ENCODE measurements at regions of chr9 and their contacts with region 1.

Region 1: GRCh38 chr9:15873569-15874177 is 320.8 kb downstream of the CCDC171 start:
- DNase-seq: no peak
- ATAC-seq: peak; percentile 46

Region 2: GRCh38 chr9:14779566-14780022 is 1094.1 kb before region 1 on chr9:
- intact Hi-C with region 1: no loop called
- DNase-seq: no peak
- ATAC-seq: no peak

Region 3: GRCh38 chr9:16133556-16134227 is 260.0 kb after region 1 on chr9:
- intact Hi-C with region 1: loop called in 1 of 2 experiments (anchors 10 kb)
- DNase-seq: peak; percentile 31 to 47
- ATAC-seq: peak; percentile 88

Region 4: DNA sequence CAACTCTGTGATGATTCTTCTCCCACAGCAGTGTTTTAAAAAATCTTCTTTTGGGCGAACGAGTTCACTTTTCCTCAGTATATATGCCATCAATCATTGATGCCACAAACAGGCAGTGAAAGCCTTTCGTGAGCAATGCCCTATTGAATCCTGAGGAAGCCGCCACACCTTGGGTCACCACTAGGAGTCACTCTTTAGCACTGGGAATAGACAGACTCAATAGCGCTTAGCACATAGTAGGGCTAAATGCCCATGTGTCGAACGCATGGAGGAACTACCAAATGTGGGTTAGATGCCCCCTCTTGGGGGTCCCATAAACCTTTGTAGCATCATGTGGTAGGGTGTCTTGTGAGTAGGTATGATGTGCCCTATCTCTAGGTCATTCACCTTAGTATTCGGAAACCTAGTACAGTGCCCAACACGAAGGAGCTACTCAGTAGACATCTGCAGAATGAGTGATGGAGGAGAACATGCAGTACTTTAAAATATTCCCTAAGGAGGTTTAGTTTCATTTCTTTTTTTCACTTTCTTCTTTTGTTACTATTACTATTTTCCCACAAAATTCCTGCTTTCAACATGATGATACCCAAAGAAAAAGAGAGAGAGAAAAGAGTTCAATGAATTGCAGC is 393.1 kb after region 1 on chr9:
- intact Hi-C with region 1: loop called in 1 of 2 experiments (anchors 10 kb)
- DNase-seq: peak in 1 of 2 donors; percentile 18
- ATAC-seq: no peak

Measured in left colon (tissue), 2 donors.